ENCODE measurements at regions of chr6 and their contacts with region 1.

Region 1: GRCh38 chr6:127938701-127939100 is 37.8 kb upstream of the THEMIS start:
- DNase-seq: peak in 3 of 14 experiments; percentile 26 to 62 (median 43)
- ATAC-seq: no peak
- H3K4me3 ChIP-seq: no peak overlapping the region
- H3K4me3 Mint-ChIP-seq: no peak overlapping the region
- H3K27ac ChIP-seq: no peak overlapping the region
- H3K27ac Mint-ChIP-seq: peak overlapping the region; percentile 34
- H3K4me1 ChIP-seq: peaks cover 7% of the 10 kb centered on the region
- H3K4me1 Mint-ChIP-seq: peaks cover 65% of the 10 kb centered on the region
- H3K27me3 ChIP-seq: no peaks in the 10 kb centered on the region
- H3K27me3 Mint-ChIP-seq: no peaks in the 10 kb centered on the region
- CTCF ChIP-seq: no peak

Region 2: GRCh38 chr6:127900935-127901334 is 37.8 kb before region 1 on chr6 and contains the start of gene THEMIS:
- CTCF ChIA-PET with region 1: no interaction called
- POLR2A ChIA-PET with region 1: interaction called, 24 read pairs
- intact Hi-C with region 1: loop called in 1 of 2 experiments (anchors 5 kb)
- DNase-seq: peak in 13 of 14 experiments; percentile 22 to 89 (median 44)
- ATAC-seq: peak; percentile 75
- H3K4me3 ChIP-seq: peak within 1 kb of the TSS; percentile 71
- H3K4me3 Mint-ChIP-seq: peak within 1 kb of the TSS; percentile 98
- H3K27ac ChIP-seq: peak within 1 kb of the TSS; percentile 48 to 61
- H3K27ac Mint-ChIP-seq: peak within 1 kb of the TSS; percentile 91
- H3K4me1 ChIP-seq: peaks cover 13% of the 10 kb centered on the region
- H3K4me1 Mint-ChIP-seq: peaks cover 72% of the 10 kb centered on the region
- H3K27me3 ChIP-seq: no peaks in the 10 kb centered on the region
- H3K27me3 Mint-ChIP-seq: no peaks in the 10 kb centered on the region
- CTCF ChIP-seq: no peak
- total RNA-seq, gene THEMIS: 25.0 to 25.3 TPM

Region 3: DNA sequence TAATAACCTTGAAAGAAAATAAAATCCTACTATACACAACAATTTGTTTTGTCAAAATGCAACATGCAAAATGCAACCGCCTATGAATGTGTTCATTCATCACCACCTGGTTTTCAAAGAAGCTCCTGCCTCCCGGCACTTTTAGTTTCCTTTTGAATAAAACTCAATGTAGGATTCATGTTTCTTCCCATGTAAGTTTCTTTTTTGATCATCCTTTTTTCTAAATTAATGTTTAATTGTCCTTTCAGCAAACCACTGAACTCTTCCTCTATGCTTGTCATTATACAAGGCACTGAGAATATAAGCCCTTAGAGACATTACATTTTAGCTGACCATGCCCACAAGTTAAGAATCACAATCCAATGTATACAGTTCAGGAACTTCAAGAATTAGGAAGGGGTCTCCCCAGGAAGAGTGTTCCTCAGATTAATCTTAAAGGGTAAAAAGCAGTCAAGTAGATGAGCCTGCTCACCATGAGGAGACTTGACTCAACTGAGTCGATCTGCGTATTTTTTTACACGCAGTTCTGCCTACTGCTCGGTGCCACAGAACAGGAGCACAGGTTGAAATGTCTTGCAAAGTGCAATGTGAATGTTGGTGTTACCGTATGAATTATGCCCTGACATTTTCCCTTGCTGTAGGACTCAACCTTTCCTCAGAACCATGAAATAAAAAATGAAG is 30.6 kb before region 1 on chr6:
- CTCF ChIA-PET with region 1: interaction called, 3 read pairs
- POLR2A ChIA-PET with region 1: interaction called, 17 read pairs
- intact Hi-C with region 1: loop called in 1 of 2 experiments (anchors 5 kb)
- DNase-seq: peak in 5 of 14 experiments; percentile 10 to 67 (median 53)
- ATAC-seq: peak; percentile 75
- H3K4me3 ChIP-seq: peak overlapping the region; percentile 62
- H3K4me3 Mint-ChIP-seq: peak overlapping the region; percentile 86
- H3K27ac ChIP-seq: peak overlapping the region in 1 of 2 donors; percentile 79
- H3K27ac Mint-ChIP-seq: peak overlapping the region; percentile 94
- H3K4me1 ChIP-seq: peaks cover 10% of the 10 kb centered on the region
- H3K4me1 Mint-ChIP-seq: peaks cover 71% of the 10 kb centered on the region
- H3K27me3 ChIP-seq: no peaks in the 10 kb centered on the region
- H3K27me3 Mint-ChIP-seq: no peaks in the 10 kb centered on the region
- CTCF ChIP-seq: no peak

Region 4: DNA sequence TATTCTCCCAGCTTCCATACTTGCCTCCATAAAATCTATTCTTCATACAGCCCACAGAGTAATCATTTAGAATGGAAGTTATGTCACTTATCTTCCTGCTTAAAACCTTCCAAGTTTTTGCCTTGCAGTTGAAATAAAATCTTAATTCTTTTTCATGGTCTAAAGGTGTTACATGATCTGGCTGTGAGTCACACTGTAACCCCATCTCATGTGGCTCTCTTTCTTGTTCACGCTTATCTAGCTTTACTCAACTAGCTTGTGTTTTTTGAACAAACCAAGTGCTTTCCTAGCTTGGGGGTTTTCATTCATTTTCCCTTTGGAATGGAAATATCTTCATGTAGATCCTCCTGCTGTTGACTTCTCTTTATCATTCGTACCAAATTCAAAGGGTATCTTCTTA is 14.3 kb before region 1 on chr6:
- CTCF ChIA-PET with region 1: interaction called, 3 read pairs
- POLR2A ChIA-PET with region 1: interaction called, 61 read pairs
- intact Hi-C with region 1: loop called in 1 of 2 experiments (anchors 2 kb)
- DNase-seq: no peak
- ATAC-seq: no peak
- H3K4me3 ChIP-seq: no peak overlapping the region
- H3K4me3 Mint-ChIP-seq: peak overlapping the region; percentile 3
- H3K27ac ChIP-seq: no peak overlapping the region
- H3K27ac Mint-ChIP-seq: no peak overlapping the region
- H3K4me1 ChIP-seq: peaks cover 37% of the 10 kb centered on the region
- H3K4me1 Mint-ChIP-seq: peaks cover 57% of the 10 kb centered on the region
- H3K27me3 ChIP-seq: no peaks in the 10 kb centered on the region
- H3K27me3 Mint-ChIP-seq: no peaks in the 10 kb centered on the region
- CTCF ChIP-seq: no peak

Region 5: GRCh38 chr6:127951172-127951917 is 12.6 kb after region 1 on chr6:
- CTCF ChIA-PET with region 1: interaction called, 3 read pairs
- POLR2A ChIA-PET with region 1: interaction called, 21 read pairs
- intact Hi-C with region 1: loop called in 1 of 2 experiments (anchors 1 kb)
- DNase-seq: peak in 3 of 14 experiments; percentile 53 to 79 (median 59)
- ATAC-seq: peak; percentile 80
- H3K4me3 ChIP-seq: peak overlapping the region; percentile 13
- H3K4me3 Mint-ChIP-seq: peak overlapping the region; percentile 62
- H3K27ac ChIP-seq: peak overlapping the region; percentile 36 to 42
- H3K27ac Mint-ChIP-seq: peak overlapping the region; percentile 85
- H3K4me1 ChIP-seq: peaks cover 28% of the 10 kb centered on the region
- H3K4me1 Mint-ChIP-seq: peaks cover 69% of the 10 kb centered on the region
- H3K27me3 ChIP-seq: no peaks in the 10 kb centered on the region
- H3K27me3 Mint-ChIP-seq: no peaks in the 10 kb centered on the region
- CTCF ChIP-seq: no peak

Region 6: DNA sequence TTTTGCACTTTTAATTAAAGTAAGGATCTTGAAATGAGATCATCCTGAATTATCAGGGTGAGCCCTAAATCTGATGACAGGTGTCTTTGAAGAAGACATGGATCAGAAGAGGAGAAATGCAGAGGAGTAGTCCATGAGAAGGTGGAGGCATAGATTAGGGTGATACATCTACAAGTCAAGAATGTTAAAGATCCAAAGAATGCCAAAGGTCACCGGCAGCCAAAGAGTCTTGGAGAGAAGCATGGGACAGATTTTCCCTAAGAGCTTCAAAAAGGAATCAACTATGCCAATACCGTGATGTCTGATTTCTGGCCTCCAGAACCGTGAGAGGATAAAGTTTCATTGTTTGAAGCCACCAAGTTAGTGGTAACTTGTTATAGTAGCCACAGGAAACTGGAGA is 21.2 kb after region 1 on chr6:
- CTCF ChIA-PET with region 1: no interaction called
- POLR2A ChIA-PET with region 1: no interaction called
- intact Hi-C with region 1: loop called in 1 of 2 experiments (anchors 2 kb)
- DNase-seq: no peak
- ATAC-seq: no peak
- H3K4me3 ChIP-seq: no peak overlapping the region
- H3K4me3 Mint-ChIP-seq: no peak overlapping the region
- H3K27ac ChIP-seq: no peak overlapping the region
- H3K27ac Mint-ChIP-seq: no peak overlapping the region
- H3K4me1 ChIP-seq: no peaks in the 10 kb centered on the region
- H3K4me1 Mint-ChIP-seq: peaks cover 15% of the 10 kb centered on the region
- H3K27me3 ChIP-seq: no peaks in the 10 kb centered on the region
- H3K27me3 Mint-ChIP-seq: no peaks in the 10 kb centered on the region
- CTCF ChIP-seq: no peak

Region 7: GRCh38 chr6:127971945-127972391 is 33.3 kb after region 1 on chr6:
- CTCF ChIA-PET with region 1: interaction called, 5 read pairs
- POLR2A ChIA-PET with region 1: interaction called, 24 read pairs
- intact Hi-C with region 1: loop called in 1 of 2 experiments (anchors 5 kb)
- DNase-seq: peak; percentile 22 to 91 (median 42)
- ATAC-seq: peak; percentile 88
- H3K4me3 ChIP-seq: peak overlapping the region; percentile 53
- H3K4me3 Mint-ChIP-seq: peak overlapping the region; percentile 90
- H3K27ac ChIP-seq: peak overlapping the region; percentile 67 to 84
- H3K27ac Mint-ChIP-seq: peak overlapping the region; percentile 97
- H3K4me1 ChIP-seq: peaks cover 17% of the 10 kb centered on the region
- H3K4me1 Mint-ChIP-seq: peaks cover 75% of the 10 kb centered on the region
- H3K27me3 ChIP-seq: no peaks in the 10 kb centered on the region
- H3K27me3 Mint-ChIP-seq: no peaks in the 10 kb centered on the region
- CTCF ChIP-seq: no peak

Measured in CD4-positive, alpha-beta T cell (primary cell).